Right ventricle myocardium superior (tissue), 1 donor: ENCODE measurements at regions of chr2 and their contacts with region 1.

Region 1: DNA sequence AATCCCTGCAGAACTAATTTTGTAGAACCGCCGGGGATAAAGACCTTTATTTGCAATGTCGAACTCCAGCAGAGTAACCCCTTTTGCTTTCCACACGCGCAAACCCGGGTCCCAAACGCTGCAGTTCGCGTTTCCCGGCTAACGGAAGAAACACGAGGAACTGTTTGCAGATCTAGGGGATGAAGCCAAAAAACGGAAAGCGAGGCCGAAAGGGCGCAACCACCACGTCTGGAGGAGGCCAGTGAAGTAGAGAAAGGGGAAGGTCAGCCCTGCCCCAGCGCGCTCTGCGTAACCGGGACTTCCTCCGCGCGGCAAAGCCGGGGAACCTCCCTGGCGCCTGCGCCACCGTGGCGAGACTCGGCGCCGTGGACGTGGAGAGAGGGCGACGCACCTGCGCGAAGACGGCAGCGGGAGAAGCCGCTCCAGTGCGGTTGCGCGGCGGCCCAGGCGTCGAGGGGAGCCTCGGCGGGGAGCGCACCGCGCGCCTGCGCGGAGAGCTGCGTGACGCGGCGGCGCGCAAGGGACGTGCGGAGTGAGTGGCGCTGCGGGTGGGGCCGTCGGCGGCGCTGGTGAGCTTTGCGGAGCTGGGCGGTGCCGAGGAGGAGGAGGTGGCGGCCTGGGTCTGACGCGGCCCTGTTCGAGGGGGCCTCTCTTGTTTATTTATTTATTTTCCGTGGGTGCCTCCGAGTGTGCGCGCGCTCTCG is at the start of gene PPP1CB:
- DNase-seq: peak; percentile 97
- ATAC-seq: peak; percentile 97
- total RNA-seq, gene PPP1CB: 429 TPM

Region 2: GRCh38 chr2:28594289-28595108 is 156.9 kb before region 1 on chr2:
- intact Hi-C with region 1: loop called (anchors 5 kb)
- DNase-seq: peak; percentile 94
- ATAC-seq: peak; percentile 84

Region 3: DNA sequence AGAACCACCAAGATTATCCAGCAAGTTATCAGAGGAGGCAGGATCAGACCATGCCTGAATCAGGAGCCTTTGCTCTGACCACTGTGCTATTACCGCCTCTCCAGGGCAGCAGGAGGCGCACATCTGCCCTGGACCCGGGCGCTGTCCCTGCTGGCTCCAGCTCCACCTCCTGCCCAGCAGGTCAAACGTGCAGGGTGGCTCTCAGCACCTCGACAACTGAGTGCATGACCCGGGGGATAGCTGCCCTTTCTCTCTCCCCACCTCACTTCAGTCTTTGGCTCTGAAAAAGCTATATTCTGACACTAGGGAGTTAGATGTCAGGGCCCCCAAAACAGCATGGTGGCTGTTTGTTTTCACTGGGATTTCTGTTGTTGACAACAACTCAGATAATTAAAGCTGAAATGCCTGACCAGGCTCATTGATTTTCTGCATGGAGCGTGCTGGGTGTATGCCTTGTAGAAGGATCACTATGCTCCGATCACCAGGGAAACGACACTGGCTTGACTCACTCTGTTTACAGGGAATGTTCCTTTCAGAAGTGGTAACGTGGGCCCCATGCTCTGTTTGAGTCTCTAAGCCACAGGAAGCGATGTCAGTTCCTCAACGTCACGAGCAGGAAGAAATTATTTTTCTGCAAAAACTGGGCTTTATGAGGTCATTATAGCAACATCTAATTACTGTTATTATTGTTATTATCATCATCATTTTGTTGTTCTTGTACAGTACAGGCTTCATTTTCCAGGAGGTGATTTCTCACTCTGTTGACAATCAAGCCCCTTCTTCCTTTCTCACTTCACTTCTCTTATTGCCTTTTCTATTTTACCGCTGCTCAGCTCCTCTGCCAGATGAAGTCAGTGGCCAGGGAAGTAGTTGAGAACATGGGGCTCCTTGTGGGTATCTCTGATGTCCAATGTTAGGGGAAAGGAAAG is 130.0 kb before region 1 on chr2:
- intact Hi-C with region 1: loop called (anchors 10 kb)
- DNase-seq: no peak
- ATAC-seq: peak; percentile 67

Region 4: DNA sequence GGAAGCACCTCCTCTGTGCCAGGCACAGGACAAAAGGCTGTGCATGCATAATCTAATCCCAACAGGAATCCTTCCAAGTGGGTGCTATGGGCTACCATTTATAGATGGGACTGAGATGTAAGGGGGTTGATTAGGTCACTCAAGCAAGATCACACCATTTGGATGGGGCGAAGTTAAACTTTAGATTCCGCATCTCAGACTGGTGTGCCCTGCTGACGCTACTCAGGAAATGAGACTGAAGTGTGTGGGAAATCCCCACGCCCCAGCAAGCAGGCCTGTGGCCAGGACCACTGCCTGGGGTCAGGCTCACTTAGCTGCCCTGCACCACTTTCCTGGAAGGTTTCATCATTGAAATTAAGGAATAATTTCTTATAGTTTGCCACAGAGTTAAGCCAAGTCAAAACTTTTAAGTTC is 70.2 kb before region 1 on chr2:
- intact Hi-C with region 1: loop called (anchors 5 kb)
- DNase-seq: no peak
- ATAC-seq: no peak

Region 5: GRCh38 chr2:28796620-28797019 is 45.2 kb after region 1 on chr2:
- intact Hi-C with region 1: no loop called
- DNase-seq: no peak
- ATAC-seq: peak; percentile 27